ENCODE measurements at regions of chr5 and their contacts with region 1.

Region 1: DNA sequence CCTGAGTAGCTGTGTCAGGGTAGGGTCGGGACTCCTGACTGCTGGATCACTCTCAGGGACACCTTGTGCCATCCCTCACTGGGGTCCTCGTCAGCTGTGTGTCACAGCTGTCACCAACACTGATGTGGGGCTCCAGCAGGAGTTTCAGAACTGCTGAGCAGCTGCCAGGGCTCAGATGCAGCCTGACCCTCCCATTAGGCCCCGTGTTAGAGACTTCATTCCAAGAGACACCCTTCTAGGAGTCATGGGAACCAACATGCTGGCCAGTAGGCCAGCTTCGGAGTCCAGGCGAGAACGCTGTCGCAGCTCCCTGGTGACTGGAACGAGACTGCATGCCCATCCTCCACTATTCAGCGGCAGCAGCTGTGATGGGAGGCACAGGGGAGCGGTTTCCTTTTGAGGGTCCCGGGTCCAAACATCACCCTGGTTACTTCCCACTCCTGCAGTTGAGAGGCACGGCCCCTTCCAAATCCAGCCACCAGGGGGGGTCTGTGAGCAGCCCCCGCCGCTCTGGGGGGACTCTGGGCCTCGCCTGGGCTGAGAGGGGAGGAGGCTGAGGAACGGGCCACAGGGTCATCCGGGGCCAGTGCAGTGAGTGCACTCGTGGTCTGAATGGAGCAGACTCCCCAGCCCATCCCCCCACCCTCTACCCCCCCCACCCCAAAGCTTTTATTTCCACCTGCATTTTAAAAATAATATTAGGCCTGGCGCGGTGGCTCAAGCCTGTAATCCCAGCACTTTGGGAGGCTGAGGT is 12.6 kb upstream of the TCF7 start:
- DNase-seq: peak; percentile 43
- ATAC-seq: peak; percentile 40
- H3K4me3 ChIP-seq: peak overlapping the region; percentile 28; the same call in 1 of the 2 replicates
- H3K27ac ChIP-seq: peak overlapping the region; percentile 95
- H3K4me1 ChIP-seq: peaks cover 70% of the 10 kb centered on the region
- H3K27me3 ChIP-seq: no peaks in the 10 kb centered on the region
- CTCF ChIP-seq: peak; percentile 79 to 92 (median 80)
- EP300 ChIP-seq: no peak
- POLR2A ChIP-seq: peak; percentile 55
- RAD21 ChIP-seq: peak; percentile 77

Region 2: GRCh38 chr5:134053840-134054338 is 48.0 kb before region 1 on chr5:
- CTCF ChIA-PET with region 1: interaction called, 33 read pairs
- POLR2A ChIA-PET with region 1: interaction called, 6 read pairs
- RAD21 ChIA-PET with region 1: interaction called, 27 read pairs
- SMC1A ChIA-PET with region 1: interaction called, 8 read pairs
- in situ Hi-C with region 1: no loop called
- intact Hi-C with region 1: no loop called
- DNase-seq: no peak
- ATAC-seq: peak; percentile 89
- H3K4me3 ChIP-seq: no peak overlapping the region
- H3K27ac ChIP-seq: no peak overlapping the region
- H3K4me1 ChIP-seq: peaks cover 11% of the 10 kb centered on the region
- H3K27me3 ChIP-seq: no peaks in the 10 kb centered on the region
- CTCF ChIP-seq: no peak
- EP300 ChIP-seq: no peak; a peak in 1 of 4 replicates
- POLR2A ChIP-seq: no peak
- RAD21 ChIP-seq: no peak

Region 3: DNA sequence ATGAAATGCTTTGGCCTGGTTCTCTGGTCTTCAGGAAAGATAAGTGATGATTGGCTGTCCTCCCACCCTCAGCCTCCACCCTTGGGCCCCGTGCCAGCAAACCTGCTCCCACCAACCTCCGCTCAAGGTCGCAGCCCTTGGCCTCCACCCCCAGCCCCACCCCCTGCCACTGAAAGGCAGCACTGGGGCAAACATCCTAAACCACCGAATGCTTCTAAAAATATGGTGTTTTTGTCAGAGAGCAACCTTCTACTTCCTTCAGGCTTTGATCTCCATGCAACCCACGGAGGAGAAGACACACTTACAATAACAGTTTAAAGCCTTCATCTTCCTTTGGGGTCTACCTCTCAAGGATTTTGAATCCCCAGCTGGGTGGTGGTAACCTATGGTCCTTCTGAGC is 11.3 kb before region 1 on chr5:
- CTCF ChIA-PET with region 1: interaction called, 8 read pairs
- POLR2A ChIA-PET with region 1: interaction called, 8 read pairs
- RAD21 ChIA-PET with region 1: interaction called, 20 read pairs
- SMC1A ChIA-PET with region 1: interaction called, 8 read pairs
- in situ Hi-C with region 1: no loop called
- intact Hi-C with region 1: no loop called
- DNase-seq: no peak
- ATAC-seq: no peak; the same call in 2 of the 3 replicates
- H3K4me3 ChIP-seq: no peak overlapping the region
- H3K27ac ChIP-seq: no peak overlapping the region
- H3K4me1 ChIP-seq: peaks cover 13% of the 10 kb centered on the region
- H3K27me3 ChIP-seq: no peaks in the 10 kb centered on the region
- CTCF ChIP-seq: no peak
- EP300 ChIP-seq: no peak
- POLR2A ChIP-seq: no peak
- RAD21 ChIP-seq: no peak

Region 4: DNA sequence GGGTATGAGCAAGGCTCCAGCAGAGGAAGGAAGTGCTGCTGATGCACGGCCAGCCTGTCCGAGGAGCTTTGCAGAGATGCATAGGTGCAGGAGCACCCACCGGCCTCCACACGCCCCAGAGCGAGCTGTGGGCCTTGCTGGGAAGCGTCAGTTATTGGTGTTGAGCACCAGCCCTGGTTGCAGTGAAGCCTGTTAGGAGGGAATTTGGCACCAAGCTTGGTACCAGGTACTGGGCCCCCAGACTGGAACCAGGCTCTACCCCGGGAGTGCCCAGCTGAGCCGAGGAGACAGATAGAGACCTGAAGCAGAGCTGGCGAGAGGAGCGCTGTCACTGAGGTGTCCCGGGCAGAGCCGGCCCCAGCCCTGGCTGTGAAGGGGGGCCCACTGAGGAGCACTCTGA is 17.9 kb after region 1 on chr5:
- CTCF ChIA-PET with region 1: interaction called, 112 read pairs
- POLR2A ChIA-PET with region 1: no interaction called
- RAD21 ChIA-PET with region 1: interaction called, 6 read pairs
- SMC1A ChIA-PET with region 1: interaction called, 152 read pairs
- in situ Hi-C with region 1: no loop called
- intact Hi-C with region 1: loop called (anchors 1 kb)
- DNase-seq: no peak
- ATAC-seq: no peak
- H3K4me3 ChIP-seq: no peak overlapping the region
- H3K27ac ChIP-seq: no peak overlapping the region
- H3K4me1 ChIP-seq: peaks cover 28% of the 10 kb centered on the region
- H3K27me3 ChIP-seq: no peaks in the 10 kb centered on the region
- CTCF ChIP-seq: no peak
- EP300 ChIP-seq: no peak
- POLR2A ChIP-seq: no peak
- RAD21 ChIP-seq: no peak

Region 5: DNA sequence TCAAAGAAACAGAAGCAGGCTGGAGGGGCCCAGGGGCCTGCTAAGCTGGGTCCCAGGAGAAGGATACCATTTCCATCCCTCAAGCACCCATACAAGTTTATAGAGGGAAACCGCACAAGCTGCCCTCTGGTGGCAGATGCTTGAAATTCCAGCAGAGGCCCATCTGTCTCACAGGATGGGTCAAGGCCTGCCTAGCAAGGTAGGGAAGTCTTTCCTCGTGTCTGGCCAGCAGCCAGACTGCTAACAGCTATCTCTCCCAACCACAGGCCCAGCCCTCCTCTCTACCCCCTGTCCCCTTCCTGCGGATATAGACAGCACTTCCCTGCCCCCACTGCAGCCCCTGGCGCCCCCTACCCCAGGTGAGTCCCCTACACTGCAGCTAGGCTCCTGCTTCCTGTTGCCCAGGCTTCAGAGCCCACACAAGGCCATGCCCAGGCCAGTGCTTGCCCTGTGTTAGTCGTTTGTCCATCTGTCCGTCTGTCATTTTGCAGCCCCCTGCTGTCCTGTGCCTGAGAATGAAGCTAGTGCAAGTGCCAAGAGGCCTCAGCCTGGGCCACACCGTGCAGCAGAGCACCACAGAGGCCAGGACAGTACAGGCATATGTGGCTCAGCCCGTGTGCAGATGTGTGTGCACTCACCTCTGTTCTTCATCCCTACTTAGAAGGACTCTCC is 38.8 kb after region 1 on chr5:
- CTCF ChIA-PET with region 1: no interaction called
- POLR2A ChIA-PET with region 1: no interaction called
- RAD21 ChIA-PET with region 1: interaction called, 7 read pairs
- SMC1A ChIA-PET with region 1: interaction called, 27 read pairs
- in situ Hi-C with region 1: loop called (anchors 5 kb)
- intact Hi-C with region 1: loop called (anchors 1 kb)
- DNase-seq: no peak
- ATAC-seq: peak; percentile 68
- H3K4me3 ChIP-seq: no peak overlapping the region
- H3K27ac ChIP-seq: peak overlapping the region; percentile 90
- H3K4me1 ChIP-seq: peaks cover 50% of the 10 kb centered on the region
- H3K27me3 ChIP-seq: no peaks in the 10 kb centered on the region
- CTCF ChIP-seq: peak; percentile 78 to 83 (median 80)
- EP300 ChIP-seq: no peak
- POLR2A ChIP-seq: peak; percentile 41; the same call in 1 of the 2 replicates
- RAD21 ChIP-seq: peak; percentile 82

Region 6: DNA sequence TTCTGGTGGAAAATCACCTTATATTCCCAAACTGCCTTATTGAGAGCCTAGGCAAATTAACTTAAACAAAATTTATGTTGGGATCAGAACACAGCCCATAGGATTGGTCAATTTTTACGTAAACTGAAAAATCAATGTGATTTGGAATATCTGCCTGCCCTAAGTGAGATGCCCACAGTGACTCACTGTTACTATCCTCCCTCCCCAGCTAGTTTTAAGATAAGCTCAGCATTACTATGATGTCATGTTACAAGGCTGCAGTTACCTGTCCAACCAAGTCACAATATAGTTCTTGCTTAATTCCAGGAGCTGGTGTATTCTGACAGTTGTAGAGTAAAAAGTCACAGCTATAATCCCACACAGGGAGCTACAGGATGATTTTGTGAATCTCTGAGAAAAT is 51.8 kb after region 1 on chr5:
- CTCF ChIA-PET with region 1: interaction called, 17 read pairs
- POLR2A ChIA-PET with region 1: interaction called, 3 read pairs
- RAD21 ChIA-PET with region 1: interaction called, 30 read pairs
- SMC1A ChIA-PET with region 1: interaction called, 5 read pairs
- in situ Hi-C with region 1: no loop called
- intact Hi-C with region 1: no loop called
- DNase-seq: no peak
- ATAC-seq: no peak
- H3K4me3 ChIP-seq: no peak overlapping the region
- H3K27ac ChIP-seq: no peak overlapping the region
- H3K4me1 ChIP-seq: no peaks in the 10 kb centered on the region
- H3K27me3 ChIP-seq: no peaks in the 10 kb centered on the region
- CTCF ChIP-seq: no peak
- EP300 ChIP-seq: no peak
- POLR2A ChIP-seq: no peak
- RAD21 ChIP-seq: no peak

Measured in GM12878 (cell line).